Activated T-helper 2 cell treated with anti-CD3 and anti-CD28 coated beads, Interferon-gamma antibody, Interleukin-2, Interleukin-4, amounts not matched to agents 10 μg/mL and 5 μg/mL and 100 μg/mL, durations not matched to agents 14 hours and 24 hours and 36 hours (primary cell): ENCODE measurements at regions of chr12 and their contacts with region 1.

Region 1: GRCh38 chr12:121688966-121689365 is 19.5 kb upstream of the MORN3 start:
- DNase-seq: no peak
- H3K4me3 Mint-ChIP-seq: no peak overlapping the region
- H3K27ac Mint-ChIP-seq: no peak overlapping the region
- H3K4me1 Mint-ChIP-seq: peaks cover 5% of the 10 kb centered on the region
- H3K27me3 Mint-ChIP-seq: no peaks in the 10 kb centered on the region

Region 2: GRCh38 chr12:121712461-121713256 is 23.7 kb after region 1 on chr12 and contains the start of gene TMEM120B:
- intact Hi-C with region 1: loop called (anchors 2 kb)
- DNase-seq: peak; percentile 82
- H3K4me3 Mint-ChIP-seq: peak within 1 kb of the TSS; percentile 97
- H3K27ac Mint-ChIP-seq: peak within 1 kb of the TSS; percentile 85
- H3K4me1 Mint-ChIP-seq: peaks cover 18% of the 10 kb centered on the region
- H3K27me3 Mint-ChIP-seq: peaks cover 1% of the 10 kb centered on the region
- total RNA-seq, gene TMEM120B: 14.1 and 14.2 TPM in 2 replicates